ENCODE measurements at regions of chr18 and their contacts with region 1.

Region 1: DNA sequence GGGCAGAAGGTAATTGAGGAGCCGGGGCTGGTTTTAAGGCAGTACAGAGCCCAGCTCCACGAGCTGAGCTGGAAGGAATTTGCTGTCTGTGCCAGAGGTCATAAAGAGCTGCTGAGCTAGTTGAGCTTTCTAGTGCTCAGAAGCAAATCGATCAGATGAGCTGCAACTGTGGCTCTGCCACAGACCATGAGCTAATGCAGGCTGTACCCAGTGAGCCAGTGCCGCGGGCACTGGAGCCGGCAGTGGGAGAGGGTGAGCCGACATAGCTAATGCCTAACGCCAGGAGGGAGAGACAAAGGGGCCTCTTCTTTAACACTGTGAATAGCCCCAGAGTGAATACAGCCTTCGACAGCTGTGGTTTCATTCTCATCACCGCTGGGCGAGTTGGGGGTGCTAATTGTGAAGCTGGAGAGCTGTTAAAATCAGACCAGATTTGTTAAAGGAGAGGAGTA is 410.1 kb upstream of the TCF4 start:
- DNase-seq: peak in 1 of 2 donors; percentile 6
- ATAC-seq: peak; percentile 43 to 68 (median 57)
- H3K4me3 ChIP-seq: peak overlapping the region in 6 of 10 donors; percentile 7 to 31 (median 24)
- H3K27ac ChIP-seq: peak overlapping the region in 5 of 10 donors; percentile 45 to 71 (median 68)
- H3K4me1 ChIP-seq: peaks cover 0 to 34% (median 18%) of the 10 kb centered on the region in 9 donors
- H3K27me3 ChIP-seq: no peaks in the 10 kb centered on the region
- CTCF ChIP-seq: no peak

Region 2: GRCh38 chr18:55300421-55300935 is 697.6 kb before region 1 on chr18:
- intact Hi-C with region 1: no loop called
- DNase-seq: peak in 1 of 2 donors; percentile 6
- ATAC-seq: peak in 2 of 8 donors; percentile 5 to 17
- H3K4me3 ChIP-seq: peak overlapping the region in 3 of 10 donors; percentile 1 to 24 (median 9)
- H3K27ac ChIP-seq: peak overlapping the region in 5 of 10 donors; percentile 14 to 64 (median 31)
- H3K4me1 ChIP-seq: peaks cover 0 to 97% (median 59%) of the 10 kb centered on the region in 9 donors
- H3K27me3 ChIP-seq: no peaks in the 10 kb centered on the region
- CTCF ChIP-seq: no peak

Region 3: GRCh38 chr18:55869556-55870501 is 128.3 kb before region 1 on chr18:
- intact Hi-C with region 1: loop called in 1 of 10 experiments (anchors 10 kb)
- DNase-seq: peak in 1 of 2 donors; percentile 24
- ATAC-seq: peak in 7 of 8 donors; percentile 84 to 90 (median 87)
- H3K4me3 ChIP-seq: peak overlapping the region in 1 of 10 donors; percentile 5
- H3K27ac ChIP-seq: peak overlapping the region in 8 of 10 donors; percentile 7 to 66 (median 52)
- H3K4me1 ChIP-seq: peaks cover 0 to 51% (median 20%) of the 10 kb centered on the region in 9 donors
- H3K27me3 ChIP-seq: no peaks in the 10 kb centered on the region
- CTCF ChIP-seq: no peak

Region 4: GRCh38 chr18:56076723-56077122 is 78.6 kb after region 1 on chr18:
- intact Hi-C with region 1: no loop called
- DNase-seq: no peak
- ATAC-seq: no peak
- H3K4me3 ChIP-seq: no peak overlapping the region
- H3K27ac ChIP-seq: no peak overlapping the region
- H3K4me1 ChIP-seq: peaks cover 0 to 16% (median 7%) of the 10 kb centered on the region in 9 donors
- H3K27me3 ChIP-seq: no peaks in the 10 kb centered on the region
- CTCF ChIP-seq: no peak

Region 5: GRCh38 chr18:56374007-56374655 is 376.0 kb after region 1 on chr18:
- intact Hi-C with region 1: no loop called
- DNase-seq: no peak
- ATAC-seq: no peak
- H3K4me3 ChIP-seq: no peak overlapping the region
- H3K27ac ChIP-seq: no peak overlapping the region
- H3K4me1 ChIP-seq: peaks cover 0 to 5% (median 0%) of the 10 kb centered on the region in 9 donors
- H3K27me3 ChIP-seq: no peaks in the 10 kb centered on the region
- CTCF ChIP-seq: no peak

Region 6: GRCh38 chr18:56563568-56563967 is 565.5 kb after region 1 on chr18:
- intact Hi-C with region 1: loop called in 2 of 10 experiments (anchors 10 kb)
- DNase-seq: no peak
- ATAC-seq: peak in 1 of 8 donors; percentile 31
- H3K4me3 ChIP-seq: no peak overlapping the region
- H3K27ac ChIP-seq: no peak overlapping the region
- H3K4me1 ChIP-seq: peaks cover 0 to 18% (median 0%) of the 10 kb centered on the region in 9 donors
- H3K27me3 ChIP-seq: no peaks in the 10 kb centered on the region
- CTCF ChIP-seq: peak in 2 of 9 donors; percentile 17 to 19

Measured in heart right ventricle (tissue), 16 donors.